ENCODE measurements at regions of chr1 and their contacts with region 1.

Region 1: GRCh38 chr1:227787513-227788270 is 27.8 kb upstream of the PRSS38 start:
- DNase-seq: peak; percentile 81 to 98
- H3K4me3 ChIP-seq: peak overlapping the region; percentile 57
- H3K27ac ChIP-seq: no peak overlapping the region
- H3K4me1 ChIP-seq: peaks cover 6% of the 10 kb centered on the region; the same call in 1 of the 2 replicates
- H3K27me3 ChIP-seq: no peaks in the 10 kb centered on the region
- CTCF ChIP-seq: no peak

Region 2: GRCh38 chr1:227768125-227768439 is 19.6 kb before region 1 on chr1:
- CTCF ChIA-PET with region 1: interaction called, 11 read pairs
- POLR2A ChIA-PET with region 1: interaction called, 8 read pairs
- intact Hi-C with region 1: loop called (anchors 1 kb)
- DNase-seq: no peak
- H3K4me3 ChIP-seq: no peak overlapping the region
- H3K27ac ChIP-seq: no peak overlapping the region
- H3K4me1 ChIP-seq: peaks cover 39% of the 10 kb centered on the region
- H3K27me3 ChIP-seq: no peaks in the 10 kb centered on the region
- CTCF ChIP-seq: no peak

Region 3: DNA sequence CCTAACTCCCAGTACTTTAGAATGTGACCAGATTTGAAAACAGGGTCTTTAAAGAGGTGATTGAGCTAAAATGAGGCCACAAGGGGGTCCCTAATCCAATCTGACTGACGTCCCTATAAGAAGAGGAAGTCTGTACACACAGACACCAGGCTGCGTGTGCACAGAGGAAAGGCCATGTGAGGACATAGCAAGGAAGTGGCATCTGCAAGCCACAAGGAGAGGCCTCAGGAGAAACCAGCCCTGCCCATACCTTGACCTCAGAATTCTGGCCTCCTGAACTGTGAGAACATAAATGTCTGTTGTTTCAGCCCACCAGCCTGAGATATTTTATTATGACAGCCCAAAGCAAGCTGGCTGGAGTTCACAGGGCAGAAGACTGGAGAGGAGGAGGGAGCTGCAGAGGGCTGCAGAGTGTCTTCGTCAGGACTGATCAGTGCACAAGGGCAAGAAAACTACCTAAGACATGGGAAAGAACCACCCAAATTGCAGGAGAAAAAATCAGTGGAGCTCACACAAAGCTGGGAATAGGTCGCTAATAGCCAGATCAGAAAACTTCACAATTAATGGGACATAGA is 174.0 kb after region 1 on chr1:
- CTCF ChIA-PET with region 1: no interaction called
- POLR2A ChIA-PET with region 1: interaction called, 14 read pairs
- intact Hi-C with region 1: no loop called
- DNase-seq: no peak
- H3K4me3 ChIP-seq: no peak overlapping the region
- H3K27ac ChIP-seq: no peak overlapping the region
- H3K4me1 ChIP-seq: no peaks in the 10 kb centered on the region
- H3K27me3 ChIP-seq: peaks cover 11% of the 10 kb centered on the region; the same call in 1 of the 2 replicates
- CTCF ChIP-seq: no peak

Region 4: GRCh38 chr1:228445843-228446650 is 658.4 kb after region 1 on chr1:
- CTCF ChIA-PET with region 1: no interaction called
- POLR2A ChIA-PET with region 1: interaction called, 10 read pairs
- intact Hi-C with region 1: no loop called
- DNase-seq: peak in 1 of 2 experiments; percentile 18
- H3K4me3 ChIP-seq: no peak overlapping the region
- H3K27ac ChIP-seq: no peak overlapping the region
- H3K4me1 ChIP-seq: peaks cover 15% of the 10 kb centered on the region
- H3K27me3 ChIP-seq: no peaks in the 10 kb centered on the region
- CTCF ChIP-seq: no peak